Activated CD8-positive, alpha-beta memory T cell treated with anti-CD3 and anti-CD28 coated beads, Interleukin-2, amount 10 ng/mL, durations not matched to agents 7 days and 5 days (primary cell): ENCODE measurements at regions of chr22 and their contacts with region 1.

Region 1: DNA sequence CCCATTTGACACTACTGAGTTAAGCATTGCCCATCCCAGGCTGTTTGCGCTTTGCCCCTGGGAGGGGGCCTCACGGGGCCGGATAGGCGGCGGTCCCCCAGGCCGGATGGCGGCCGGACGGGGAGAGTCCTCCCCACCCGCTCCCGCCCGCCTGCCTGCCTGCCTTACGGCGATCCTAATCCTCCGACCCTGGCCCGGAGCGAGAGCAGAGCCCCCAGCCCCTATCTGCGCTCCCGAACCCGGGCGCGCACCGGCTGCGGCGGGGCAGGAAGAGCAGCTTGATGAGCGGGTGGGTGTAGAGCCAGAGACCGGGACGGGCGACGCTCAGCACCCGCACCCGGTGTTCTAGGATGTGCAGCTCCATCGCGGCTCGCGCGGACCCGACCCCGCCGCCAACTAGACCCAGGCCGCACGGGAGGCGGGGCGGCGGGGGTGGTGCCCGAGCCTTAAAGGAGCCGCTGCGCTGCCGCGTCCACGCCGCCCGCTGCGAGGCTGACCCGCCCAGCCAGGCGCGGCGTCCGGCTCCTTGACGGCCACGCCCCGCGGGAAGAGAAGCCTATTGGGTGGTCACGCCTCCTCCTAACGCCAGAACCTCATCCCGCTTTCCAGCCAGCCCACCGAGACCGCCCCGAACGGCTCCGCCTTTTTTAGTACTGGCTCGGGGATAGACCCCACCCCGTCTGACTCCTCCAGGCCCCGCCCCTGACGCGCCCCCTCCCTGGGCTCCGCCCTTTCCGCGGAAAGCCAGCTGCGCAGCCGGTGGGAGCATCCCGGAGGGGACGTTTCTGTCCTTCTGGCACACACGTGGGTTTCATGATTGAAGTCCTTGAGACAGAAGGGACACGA is at the start of gene CASTOR1:
- DNase-seq: peak; percentile 96
- ATAC-seq: peak; percentile 86
- H3K4me3 Mint-ChIP-seq: peak within 1 kb of the TSS; percentile 74
- H3K27ac Mint-ChIP-seq: peak within 1 kb of the TSS; percentile 83
- H3K4me1 Mint-ChIP-seq: peaks cover 51% of the 10 kb centered on the region
- H3K27me3 Mint-ChIP-seq: no peaks in the 10 kb centered on the region
- total RNA-seq, gene CASTOR1: 8.7 to 10.2 TPM

Region 2: DNA sequence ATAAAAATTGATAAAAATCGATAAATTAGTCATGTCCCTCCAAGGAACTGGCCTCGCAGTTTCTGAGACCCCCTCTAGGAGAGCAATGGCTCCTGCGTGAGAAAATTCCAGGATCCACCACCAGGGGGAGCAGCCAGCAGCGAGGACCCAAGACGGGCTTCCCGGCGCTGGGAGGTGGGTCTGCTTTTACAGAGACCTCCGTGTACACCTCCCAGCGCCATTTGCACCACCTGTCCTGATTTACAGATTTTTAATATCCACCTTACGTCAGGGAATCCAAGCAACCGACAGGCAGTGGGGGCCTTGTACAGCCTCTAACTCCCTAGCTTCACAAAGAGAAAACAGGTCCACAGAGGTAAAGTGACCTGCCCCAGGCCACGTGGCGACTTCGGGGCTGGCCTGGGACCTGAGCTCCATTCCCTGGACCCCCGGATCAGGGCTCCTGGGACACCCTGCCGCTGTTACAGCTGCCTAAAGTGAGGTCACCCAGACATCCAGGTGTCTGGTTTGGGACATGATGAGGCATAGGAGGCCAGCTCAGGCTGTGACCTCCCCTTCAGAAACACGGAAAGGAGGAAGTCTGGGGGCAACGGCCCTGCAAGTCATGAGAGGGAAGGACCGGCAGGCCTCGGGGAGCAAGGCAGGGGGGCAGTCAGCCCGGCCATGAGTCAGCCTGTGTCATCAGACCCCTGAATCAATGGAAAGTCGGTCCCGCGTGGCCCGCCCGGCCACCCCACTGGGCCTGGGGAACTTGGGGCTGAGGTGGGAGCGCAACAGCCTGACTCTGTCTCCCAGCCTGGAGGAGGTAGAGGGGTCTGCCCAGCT is 26.2 kb before region 1 on chr22:
- CTCF ChIA-PET with region 1: interaction called, 41 read pairs
- DNase-seq: peak; percentile 86
- ATAC-seq: no peak
- H3K4me3 Mint-ChIP-seq: peak overlapping the region; percentile 98
- H3K27ac Mint-ChIP-seq: peak overlapping the region; percentile 74
- H3K4me1 Mint-ChIP-seq: peaks cover 59% of the 10 kb centered on the region
- H3K27me3 Mint-ChIP-seq: no peaks in the 10 kb centered on the region

Region 3: GRCh38 chr22:30310881-30311771 is 21.8 kb after region 1 on chr22:
- CTCF ChIA-PET with region 1: interaction called, 167 read pairs
- DNase-seq: no peak
- ATAC-seq: no peak
- H3K4me3 Mint-ChIP-seq: no peak overlapping the region
- H3K27ac Mint-ChIP-seq: peak overlapping the region; percentile 60
- H3K4me1 Mint-ChIP-seq: peaks cover 95% of the 10 kb centered on the region
- H3K27me3 Mint-ChIP-seq: no peaks in the 10 kb centered on the region

Region 4: DNA sequence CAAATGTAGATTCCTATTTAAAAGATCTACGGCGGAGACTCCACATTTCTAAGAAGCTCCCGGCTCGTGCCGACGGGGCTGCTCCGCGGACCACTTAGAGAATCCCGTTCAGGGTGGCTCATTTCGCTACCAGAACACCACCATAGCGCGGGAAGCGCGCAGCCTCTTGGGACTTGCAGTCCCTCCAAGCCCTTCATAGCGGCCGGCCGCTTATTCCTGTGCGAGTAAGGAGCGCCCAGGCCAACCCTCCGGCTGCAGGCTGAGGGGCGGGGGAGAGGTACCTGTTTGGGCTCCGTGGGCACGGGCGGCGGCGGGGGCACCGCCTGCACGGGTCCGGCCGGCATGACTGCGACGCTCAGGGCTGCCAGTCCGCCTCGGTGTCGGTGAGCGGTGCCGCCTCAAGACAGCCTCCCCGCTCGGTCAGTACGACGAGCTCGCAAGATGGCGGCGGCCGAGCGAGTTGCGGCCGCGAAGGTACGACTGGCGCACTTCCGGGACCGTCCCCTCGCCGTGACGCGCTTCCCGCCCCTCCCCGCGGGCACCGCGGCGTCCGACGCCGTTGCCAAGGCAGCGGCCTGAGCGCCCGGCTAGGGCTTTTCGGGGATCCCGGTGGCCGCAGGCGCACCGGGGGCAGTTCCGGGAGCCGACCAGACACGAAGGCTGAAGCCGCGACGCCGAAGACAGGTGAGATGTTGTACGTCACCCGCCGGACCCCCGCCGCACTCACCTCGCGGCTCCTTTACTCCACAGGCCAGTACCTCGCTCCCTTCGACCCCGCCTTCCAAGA is 67.3 kb after region 1 on chr22 and contains the starts of genes CCDC157 and SF3A1:
- CTCF ChIA-PET with region 1: interaction called, 58 read pairs
- DNase-seq: peak; percentile 96
- ATAC-seq: peak; percentile 91
- H3K4me3 Mint-ChIP-seq: peak within 1 kb of the TSS; percentile 85
- H3K27ac Mint-ChIP-seq: peak within 1 kb of the TSS; percentile 91
- H3K4me1 Mint-ChIP-seq: peaks cover 43% of the 10 kb centered on the region
- H3K27me3 Mint-ChIP-seq: no peaks in the 10 kb centered on the region
- total RNA-seq, gene CCDC157: 4.9 to 6.2 TPM
- total RNA-seq, gene SF3A1: 214 to 267 TPM

Region 5: GRCh38 chr22:30413745-30414524 is 124.6 kb after region 1 on chr22:
- CTCF ChIA-PET with region 1: interaction called, 10 read pairs
- DNase-seq: no peak
- ATAC-seq: no peak
- H3K4me3 Mint-ChIP-seq: no peak overlapping the region
- H3K27ac Mint-ChIP-seq: no peak overlapping the region
- H3K4me1 Mint-ChIP-seq: peaks cover 13% of the 10 kb centered on the region
- H3K27me3 Mint-ChIP-seq: no peaks in the 10 kb centered on the region